ENCODE measurements at regions of chr15 and their contacts with region 1.

Region 1: DNA sequence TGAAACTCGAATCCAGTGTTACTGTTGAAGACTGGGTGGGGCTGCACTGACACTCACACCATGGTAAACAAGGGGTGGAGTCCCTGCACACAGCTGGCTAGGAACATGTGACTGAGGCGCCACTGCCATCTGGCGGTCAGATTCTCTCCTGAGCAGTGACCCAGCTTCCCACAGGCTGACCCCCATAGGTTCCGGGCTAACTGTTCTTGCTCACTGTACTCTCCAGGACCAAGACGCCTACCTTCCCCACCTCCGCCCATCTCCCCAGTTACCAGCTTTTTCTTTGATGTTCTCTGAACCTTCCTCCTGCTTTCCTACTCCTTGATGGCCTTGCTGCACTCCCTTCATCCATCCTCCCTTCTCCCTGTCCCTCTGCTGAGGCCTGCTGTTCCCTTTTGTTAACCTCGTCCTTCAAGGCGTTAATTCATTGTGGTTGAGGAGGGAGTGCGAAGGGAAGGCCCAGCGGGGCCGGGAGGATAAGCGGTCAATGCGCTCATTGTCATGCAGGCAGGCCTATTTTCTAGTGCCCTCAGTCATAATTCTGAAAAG is 115.2 kb downstream of the ATP8B4 start:
- DNase-seq: peak; percentile 78
- ATAC-seq: peak; percentile 100
- H3K4me3 ChIP-seq: no peak overlapping the region
- H3K27ac ChIP-seq: no peak overlapping the region
- H3K4me1 ChIP-seq: no peaks in the 10 kb centered on the region
- H3K27me3 ChIP-seq: no peaks in the 10 kb centered on the region
- CTCF ChIP-seq: peak; percentile 91
- EP300 ChIP-seq: peak in 1 of 2 experiments; percentile 6; a peak in 1 of 4 replicates
- POLR2A ChIP-seq: no peak
- RAD21 ChIP-seq: peak; percentile 68

Region 2: GRCh38 chr15:49471733-49472132 is 532.1 kb before region 1 on chr15:
- CTCF ChIA-PET with region 1: no interaction called
- POLR2A ChIA-PET with region 1: no interaction called
- in situ Hi-C with region 1: no loop called
- intact Hi-C with region 1: loop called (anchors 1 kb)
- DNase-seq: no peak
- ATAC-seq: no peak
- H3K4me3 ChIP-seq: no peak overlapping the region
- H3K27ac ChIP-seq: no peak overlapping the region
- H3K4me1 ChIP-seq: no peaks in the 10 kb centered on the region
- H3K27me3 ChIP-seq: no peaks in the 10 kb centered on the region
- CTCF ChIP-seq: no peak
- EP300 ChIP-seq: no peak
- POLR2A ChIP-seq: no peak
- RAD21 ChIP-seq: no peak

Region 3: GRCh38 chr15:49758856-49759255 is 245.0 kb before region 1 on chr15:
- CTCF ChIA-PET with region 1: no interaction called
- POLR2A ChIA-PET with region 1: no interaction called
- in situ Hi-C with region 1: no loop called
- intact Hi-C with region 1: no loop called
- DNase-seq: no peak
- ATAC-seq: no peak
- H3K4me3 ChIP-seq: no peak overlapping the region
- H3K27ac ChIP-seq: no peak overlapping the region
- H3K4me1 ChIP-seq: no peaks in the 10 kb centered on the region
- H3K27me3 ChIP-seq: no peaks in the 10 kb centered on the region
- CTCF ChIP-seq: no peak
- EP300 ChIP-seq: no peak
- POLR2A ChIP-seq: no peak
- RAD21 ChIP-seq: no peak

Region 4: GRCh38 chr15:49876401-49877038 is 127.3 kb before region 1 on chr15:
- CTCF ChIA-PET with region 1: no interaction called
- POLR2A ChIA-PET with region 1: no interaction called
- in situ Hi-C with region 1: no loop called
- intact Hi-C with region 1: loop called (anchors 10 kb)
- DNase-seq: no peak
- ATAC-seq: peak; percentile 46
- H3K4me3 ChIP-seq: no peak overlapping the region
- H3K27ac ChIP-seq: no peak overlapping the region
- H3K4me1 ChIP-seq: no peaks in the 10 kb centered on the region
- H3K27me3 ChIP-seq: no peaks in the 10 kb centered on the region
- CTCF ChIP-seq: peak; percentile 44
- EP300 ChIP-seq: no peak
- POLR2A ChIP-seq: no peak
- RAD21 ChIP-seq: no peak

Region 5: DNA sequence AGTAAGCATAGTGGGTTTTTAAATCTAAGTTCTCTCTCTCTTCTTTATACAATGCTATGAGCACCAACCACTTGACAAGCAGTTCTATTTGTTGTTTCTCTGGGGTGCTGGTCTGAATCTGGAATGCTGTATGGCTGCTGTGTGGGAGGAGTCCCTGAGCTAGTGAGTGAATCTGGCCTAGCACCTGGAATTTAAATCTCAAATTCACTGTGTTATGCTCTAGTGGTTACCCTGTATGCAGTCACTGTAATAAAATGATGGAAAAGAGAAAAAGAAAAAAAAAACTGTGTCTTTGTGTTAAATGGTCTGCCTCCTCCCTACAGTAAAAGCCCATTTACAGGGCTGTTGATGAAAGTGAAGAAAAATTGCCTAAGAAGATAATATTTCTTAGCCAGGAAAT is 39.8 kb before region 1 on chr15:
- CTCF ChIA-PET with region 1: no interaction called
- POLR2A ChIA-PET with region 1: no interaction called
- in situ Hi-C with region 1: no loop called
- intact Hi-C with region 1: no loop called
- DNase-seq: no peak
- ATAC-seq: no peak
- H3K4me3 ChIP-seq: no peak overlapping the region
- H3K27ac ChIP-seq: no peak overlapping the region
- H3K4me1 ChIP-seq: no peaks in the 10 kb centered on the region
- H3K27me3 ChIP-seq: no peaks in the 10 kb centered on the region
- CTCF ChIP-seq: no peak
- EP300 ChIP-seq: no peak
- POLR2A ChIP-seq: no peak
- RAD21 ChIP-seq: no peak

Region 6: GRCh38 chr15:50077651-50078050 is 73.8 kb after region 1 on chr15:
- CTCF ChIA-PET with region 1: no interaction called
- POLR2A ChIA-PET with region 1: no interaction called
- in situ Hi-C with region 1: no loop called
- intact Hi-C with region 1: no loop called
- DNase-seq: no peak
- ATAC-seq: no peak
- H3K4me3 ChIP-seq: no peak overlapping the region
- H3K27ac ChIP-seq: no peak overlapping the region
- H3K4me1 ChIP-seq: no peaks in the 10 kb centered on the region
- H3K27me3 ChIP-seq: no peaks in the 10 kb centered on the region
- CTCF ChIP-seq: no peak
- EP300 ChIP-seq: no peak
- POLR2A ChIP-seq: no peak
- RAD21 ChIP-seq: no peak

Region 7: DNA sequence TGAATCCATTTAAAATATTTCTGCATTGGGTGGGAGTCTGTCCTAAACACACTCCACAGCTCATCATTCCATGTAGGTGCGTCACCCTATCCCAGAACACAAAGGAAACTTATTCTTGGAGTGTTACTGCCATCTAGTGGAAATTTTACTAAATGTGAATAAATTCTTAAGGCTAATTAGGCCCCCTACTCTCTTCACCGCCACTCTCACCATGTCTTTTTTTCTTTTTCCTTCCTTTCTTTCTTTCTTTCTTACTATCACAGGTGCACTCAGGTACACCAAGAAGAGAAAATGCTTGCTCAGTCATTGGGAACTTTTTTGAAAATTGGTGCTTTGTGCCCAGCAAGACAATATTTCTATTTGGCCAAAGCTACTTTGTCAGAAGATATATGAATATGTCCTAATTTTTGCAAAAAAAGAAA is 141.6 kb after region 1 on chr15:
- CTCF ChIA-PET with region 1: no interaction called
- POLR2A ChIA-PET with region 1: no interaction called
- in situ Hi-C with region 1: no loop called
- intact Hi-C with region 1: loop called (anchors 5 kb)
- DNase-seq: peak; percentile 78
- ATAC-seq: peak; percentile 89
- H3K4me3 ChIP-seq: peak overlapping the region in 2 of 3 experiments; percentile 31 to 36; a peak in 2 of 6 replicates
- H3K27ac ChIP-seq: no peak overlapping the region
- H3K4me1 ChIP-seq: peaks cover 16% of the 10 kb centered on the region
- H3K27me3 ChIP-seq: no peaks in the 10 kb centered on the region
- CTCF ChIP-seq: peak; percentile 75
- EP300 ChIP-seq: no peak
- POLR2A ChIP-seq: no peak
- RAD21 ChIP-seq: peak; percentile 38; the same call in 1 of the 2 replicates